Naive thymus-derived CD4-positive, alpha-beta T cell (primary cell): ENCODE measurements at regions of chr2 and their contacts with region 1.

Region 1: GRCh38 chr2:233251306-233252116 is at the start of gene ATG16L1:
- DNase-seq: peak; percentile 85 to 96 (median 95)
- ATAC-seq: peak; percentile 99
- H3K4me3 ChIP-seq: peak within 1 kb of the TSS; percentile 80
- H3K4me3 Mint-ChIP-seq: peak within 1 kb of the TSS; percentile 86 to 96 (median 92)
- H3K27ac ChIP-seq: peak within 1 kb of the TSS; percentile 81
- H3K27ac Mint-ChIP-seq: peak within 1 kb of the TSS; percentile 89 to 98 (median 93)
- H3K4me1 ChIP-seq: peaks cover 36 to 50% of the 10 kb centered on the region in 2 donors
- H3K4me1 Mint-ChIP-seq: peaks cover 47 to 81% (median 74%) of the 10 kb centered on the region in 7 donors
- H3K27me3 ChIP-seq: no peaks in the 10 kb centered on the region
- H3K27me3 Mint-ChIP-seq: no peaks in the 10 kb centered on the region
- total RNA-seq, gene ATG16L1: 61.7 to 115 (median 83.3) TPM

Region 2: DNA sequence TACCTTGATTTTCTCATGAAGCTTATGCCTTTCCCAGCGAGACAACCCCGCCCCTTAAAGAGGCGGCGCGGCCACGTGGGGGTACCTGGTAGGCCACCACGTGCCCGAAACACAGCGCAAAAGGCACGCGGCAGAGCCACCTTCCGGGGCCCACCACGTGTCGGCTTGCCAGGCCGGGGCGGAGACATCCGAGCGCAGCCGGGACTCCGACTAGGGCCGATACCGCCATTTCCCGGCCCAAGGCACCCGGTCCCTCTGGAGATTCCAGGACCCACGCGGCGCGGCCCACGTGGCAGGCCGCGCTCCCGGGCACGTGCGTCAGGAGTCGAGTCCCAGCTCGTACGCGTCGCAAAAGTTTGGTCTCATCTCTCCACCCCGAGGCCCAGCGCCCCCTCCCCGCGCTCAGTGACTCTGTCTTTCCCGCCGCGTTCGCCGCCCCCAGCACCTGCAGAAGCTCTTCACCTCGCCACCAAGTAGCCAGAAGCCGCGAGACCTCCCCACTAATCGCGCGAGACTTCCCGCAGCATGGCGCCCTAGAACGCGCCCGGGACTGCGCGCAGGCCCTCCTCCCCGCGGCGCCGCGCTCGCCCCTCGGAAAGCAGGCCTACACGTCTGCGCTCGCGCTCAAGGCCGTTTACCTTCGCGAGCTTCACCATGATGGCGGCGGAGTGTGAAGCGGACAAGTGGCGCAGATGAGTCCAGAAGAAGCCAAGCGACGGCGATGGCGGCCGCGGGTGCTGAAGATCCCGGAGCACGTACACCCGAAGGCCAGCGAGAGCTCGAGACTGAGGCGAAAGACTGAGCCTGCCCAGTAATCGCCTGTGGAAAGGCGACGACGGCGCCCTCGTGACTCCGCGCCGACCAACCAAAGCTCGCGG is 1787.6 kb before region 1 on chr2 and contains the start of gene NCL:
- CTCF ChIA-PET with region 1: no interaction called
- POLR2A ChIA-PET with region 1: no interaction called
- intact Hi-C with region 1: loop called in 1 of 2 experiments (anchors 5 kb)
- DNase-seq: peak; percentile 75 to 96 (median 91)
- ATAC-seq: peak; percentile 73
- H3K4me3 ChIP-seq: peak within 1 kb of the TSS; percentile 65
- H3K4me3 Mint-ChIP-seq: peak within 1 kb of the TSS; percentile 90 to 99 (median 95)
- H3K27ac ChIP-seq: peak within 1 kb of the TSS; percentile 96
- H3K27ac Mint-ChIP-seq: peak within 1 kb of the TSS; percentile 96 to 100 (median 100)
- H3K4me1 ChIP-seq: peaks cover 26 to 28% of the 10 kb centered on the region in 2 donors
- H3K4me1 Mint-ChIP-seq: peaks cover 39 to 65% (median 44%) of the 10 kb centered on the region in 7 donors
- H3K27me3 ChIP-seq: no peaks in the 10 kb centered on the region
- H3K27me3 Mint-ChIP-seq: no peaks in the 10 kb centered on the region
- total RNA-seq, gene NCL: 411 to 647 (median 426) TPM

Region 3: DNA sequence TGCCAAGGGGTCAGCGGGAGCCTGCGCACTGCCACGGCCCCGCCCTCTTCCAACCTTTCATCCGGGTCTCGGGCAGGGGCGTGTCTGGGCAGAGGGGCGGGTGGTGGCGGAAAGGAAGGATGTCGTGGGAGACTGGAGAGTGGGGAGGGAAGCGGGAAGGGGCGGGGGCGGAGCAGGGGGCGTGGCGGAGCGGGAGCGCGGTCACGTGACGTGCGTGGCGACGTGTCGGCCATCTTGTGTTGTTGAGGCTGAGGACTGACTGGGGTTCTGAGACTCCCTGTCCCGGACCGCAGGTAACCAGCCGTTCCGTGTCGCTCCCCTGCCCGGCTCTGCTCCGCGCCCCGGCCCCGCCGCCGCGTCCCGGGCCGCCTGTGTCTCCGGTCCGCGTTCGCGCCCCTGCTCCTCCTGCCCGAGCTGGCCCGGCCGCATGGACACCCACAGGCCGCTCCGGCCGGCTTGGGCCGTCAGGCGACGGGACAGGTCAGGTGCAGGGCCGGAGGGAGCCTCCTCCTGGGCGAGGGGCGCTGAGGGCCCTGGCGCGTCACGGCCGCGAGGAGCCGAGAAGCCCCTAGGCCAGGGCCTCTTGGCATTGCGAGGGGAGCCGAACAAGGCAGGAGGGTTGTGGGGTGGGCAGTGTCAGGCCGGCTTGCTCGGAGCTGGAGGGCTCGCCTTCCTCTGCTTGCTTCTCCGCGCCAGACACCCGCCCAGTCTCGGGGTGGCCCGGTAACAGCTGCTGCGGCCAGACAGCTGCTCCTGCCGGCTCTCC is 554.2 kb before region 1 on chr2 and contains the start of gene GIGYF2:
- CTCF ChIA-PET with region 1: no interaction called
- POLR2A ChIA-PET with region 1: no interaction called
- intact Hi-C with region 1: loop called in 1 of 2 experiments (anchors 1 kb)
- DNase-seq: peak; percentile 73 to 94 (median 84)
- ATAC-seq: peak; percentile 95
- H3K4me3 ChIP-seq: peak within 1 kb of the TSS; percentile 94
- H3K4me3 Mint-ChIP-seq: peak within 1 kb of the TSS; percentile 88 to 98 (median 93)
- H3K27ac ChIP-seq: peak within 1 kb of the TSS; percentile 96
- H3K27ac Mint-ChIP-seq: peak within 1 kb of the TSS; percentile 82 to 96 (median 87)
- H3K4me1 ChIP-seq: peaks cover 35 to 37% of the 10 kb centered on the region in 2 donors
- H3K4me1 Mint-ChIP-seq: peaks cover 22 to 40% (median 35%) of the 10 kb centered on the region in 7 donors
- H3K27me3 ChIP-seq: no peaks in the 10 kb centered on the region
- H3K27me3 Mint-ChIP-seq: peaks cover 0 to 10% (median 0%) of the 10 kb centered on the region in 5 donors
- total RNA-seq, gene GIGYF2: 70.7 to 82.8 (median 79.8) TPM

Region 4: DNA sequence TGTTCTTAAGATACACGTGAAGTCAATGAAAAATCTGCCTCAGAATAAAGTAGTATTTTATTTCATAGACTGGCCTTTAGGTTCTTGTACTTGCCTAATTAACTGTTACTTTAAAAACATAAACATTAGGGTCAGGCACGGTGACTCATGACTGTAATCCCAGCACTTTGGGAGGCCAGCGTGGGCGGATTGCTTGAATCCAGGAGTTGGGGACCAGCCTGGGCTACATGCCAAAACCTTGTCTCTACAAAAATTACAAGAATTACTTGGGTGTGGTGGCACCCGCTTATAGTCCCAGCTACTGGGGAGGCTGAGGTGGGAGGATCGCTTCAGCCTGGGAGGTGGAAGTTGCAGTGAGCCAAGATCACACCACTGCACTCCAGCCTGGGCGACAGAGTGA is 397.4 kb before region 1 on chr2:
- CTCF ChIA-PET with region 1: interaction called, 13 read pairs
- POLR2A ChIA-PET with region 1: no interaction called
- intact Hi-C with region 1: loop called (anchors 1 kb)
- DNase-seq: no peak
- ATAC-seq: no peak
- H3K4me3 ChIP-seq: no peak overlapping the region
- H3K4me3 Mint-ChIP-seq: no peak overlapping the region
- H3K27ac ChIP-seq: no peak overlapping the region
- H3K27ac Mint-ChIP-seq: no peak overlapping the region
- H3K4me1 ChIP-seq: no peaks in the 10 kb centered on the region
- H3K4me1 Mint-ChIP-seq: peaks cover 0 to 5% (median 0%) of the 10 kb centered on the region in 7 donors
- H3K27me3 ChIP-seq: no peaks in the 10 kb centered on the region
- H3K27me3 Mint-ChIP-seq: no peaks in the 10 kb centered on the region

Region 5: GRCh38 chr2:233185963-233186362 is 65.5 kb before region 1 on chr2:
- CTCF ChIA-PET with region 1: interaction called, 4 read pairs
- POLR2A ChIA-PET with region 1: no interaction called
- intact Hi-C with region 1: loop called (anchors 5 kb)
- DNase-seq: no peak
- ATAC-seq: peak; percentile 51
- H3K4me3 ChIP-seq: no peak overlapping the region
- H3K4me3 Mint-ChIP-seq: no peak overlapping the region
- H3K27ac ChIP-seq: no peak overlapping the region
- H3K27ac Mint-ChIP-seq: peak overlapping the region in 6 of 9 donors; percentile 8 to 69 (median 50)
- H3K4me1 ChIP-seq: no peaks in the 10 kb centered on the region
- H3K4me1 Mint-ChIP-seq: peaks cover 0 to 8% (median 0%) of the 10 kb centered on the region in 7 donors
- H3K27me3 ChIP-seq: no peaks in the 10 kb centered on the region
- H3K27me3 Mint-ChIP-seq: no peaks in the 10 kb centered on the region

Region 6: DNA sequence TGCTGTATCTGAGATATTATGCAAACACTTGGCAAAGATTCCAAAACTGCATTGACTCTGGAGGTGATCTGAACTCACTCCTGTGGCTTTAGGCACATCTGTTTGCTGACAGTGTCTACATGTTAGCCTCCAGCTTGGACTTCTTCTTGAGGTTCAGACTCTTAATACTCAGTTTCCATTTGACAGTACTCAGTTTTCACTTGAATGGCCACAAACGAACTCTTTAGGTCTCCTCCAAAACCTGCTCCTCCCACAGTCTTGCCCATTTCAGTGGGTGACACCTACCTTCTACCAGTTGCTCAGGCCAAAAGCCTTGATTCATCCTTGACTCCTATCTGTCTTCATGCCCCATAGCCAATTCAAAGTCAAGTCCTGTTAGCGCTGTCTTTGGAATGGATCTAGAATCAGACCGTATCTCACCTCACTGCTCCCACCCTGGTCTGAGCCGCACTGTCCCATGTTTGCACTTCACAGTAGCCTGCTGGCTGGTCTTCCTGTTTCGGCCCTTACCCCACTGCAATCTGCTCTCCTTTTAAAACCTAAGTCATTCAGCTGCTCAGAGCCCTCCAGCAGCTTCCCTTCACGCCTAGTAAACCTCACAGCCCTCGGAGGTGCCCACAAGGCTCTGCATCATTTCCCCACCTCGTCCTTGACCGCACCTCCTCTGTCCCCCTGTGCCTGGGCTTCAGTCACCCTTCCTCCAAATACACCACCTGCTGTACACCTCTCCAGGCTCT is 10.5 kb after region 1 on chr2:
- CTCF ChIA-PET with region 1: interaction called, 6 read pairs
- POLR2A ChIA-PET with region 1: interaction called, 38 read pairs
- intact Hi-C with region 1: no loop called
- DNase-seq: no peak
- ATAC-seq: peak; percentile 24
- H3K4me3 ChIP-seq: no peak overlapping the region
- H3K4me3 Mint-ChIP-seq: peak overlapping the region in 2 of 10 donors; percentile 33 to 37
- H3K27ac ChIP-seq: no peak overlapping the region
- H3K27ac Mint-ChIP-seq: peak overlapping the region; percentile 29 to 91 (median 77)
- H3K4me1 ChIP-seq: peaks cover 15 to 30% of the 10 kb centered on the region in 2 donors
- H3K4me1 Mint-ChIP-seq: peaks cover 16 to 77% (median 66%) of the 10 kb centered on the region in 7 donors
- H3K27me3 ChIP-seq: no peaks in the 10 kb centered on the region
- H3K27me3 Mint-ChIP-seq: no peaks in the 10 kb centered on the region

Region 7: GRCh38 chr2:233443468-233444183 is 192.1 kb after region 1 on chr2:
- CTCF ChIA-PET with region 1: interaction called, 4 read pairs
- POLR2A ChIA-PET with region 1: no interaction called
- intact Hi-C with region 1: loop called in 1 of 2 experiments (anchors 1 kb)
- DNase-seq: peak; percentile 60 to 89 (median 82)
- ATAC-seq: peak; percentile 96
- H3K4me3 ChIP-seq: no peak overlapping the region
- H3K4me3 Mint-ChIP-seq: peak overlapping the region in 3 of 10 donors; percentile 1 to 51 (median 19)
- H3K27ac ChIP-seq: peak overlapping the region; percentile 30
- H3K27ac Mint-ChIP-seq: peak overlapping the region; percentile 65 to 88 (median 80)
- H3K4me1 ChIP-seq: peaks cover 0 to 3% of the 10 kb centered on the region in 2 donors
- H3K4me1 Mint-ChIP-seq: peaks cover 16 to 42% (median 34%) of the 10 kb centered on the region in 7 donors
- H3K27me3 ChIP-seq: no peaks in the 10 kb centered on the region
- H3K27me3 Mint-ChIP-seq: no peaks in the 10 kb centered on the region